GM12878 (cell line): ENCODE measurements at regions of chr5 and their contacts with region 1.

Region 1: GRCh38 chr5:180975338-180975737 is 13.3 kb upstream of the BTNL3 start:
- DNase-seq: peak; percentile 83
- ATAC-seq: peak; percentile 99
- H3K4me3 ChIP-seq: no peak overlapping the region
- H3K27ac ChIP-seq: peak overlapping the region; percentile 33; the same call in 1 of the 2 replicates
- H3K4me1 ChIP-seq: peaks cover 12% of the 10 kb centered on the region
- H3K27me3 ChIP-seq: no peaks in the 10 kb centered on the region
- CTCF ChIP-seq: no peak
- EP300 ChIP-seq: peak; percentile 22 to 27; a peak in 2 of 4 replicates
- POLR2A ChIP-seq: no peak
- RAD21 ChIP-seq: no peak

Region 2: GRCh38 chr5:181052672-181053487 is 77.5 kb after region 1 on chr5:
- CTCF ChIA-PET with region 1: interaction called, 4 read pairs
- POLR2A ChIA-PET with region 1: interaction called, 4 read pairs
- RAD21 ChIA-PET with region 1: interaction called, 16 read pairs
- SMC1A ChIA-PET with region 1: interaction called, 8 read pairs
- in situ Hi-C with region 1: no loop called
- intact Hi-C with region 1: no loop called
- DNase-seq: no peak
- ATAC-seq: no peak
- H3K4me3 ChIP-seq: peak overlapping the region; percentile 57; the same call in 1 of the 2 replicates
- H3K27ac ChIP-seq: no peak overlapping the region
- H3K4me1 ChIP-seq: peaks cover 12% of the 10 kb centered on the region
- H3K27me3 ChIP-seq: peaks cover 5 to 7% of the 10 kb centered on the region in 2 experiments
- CTCF ChIP-seq: no peak
- EP300 ChIP-seq: no peak
- POLR2A ChIP-seq: no peak
- RAD21 ChIP-seq: no peak

Region 3: DNA sequence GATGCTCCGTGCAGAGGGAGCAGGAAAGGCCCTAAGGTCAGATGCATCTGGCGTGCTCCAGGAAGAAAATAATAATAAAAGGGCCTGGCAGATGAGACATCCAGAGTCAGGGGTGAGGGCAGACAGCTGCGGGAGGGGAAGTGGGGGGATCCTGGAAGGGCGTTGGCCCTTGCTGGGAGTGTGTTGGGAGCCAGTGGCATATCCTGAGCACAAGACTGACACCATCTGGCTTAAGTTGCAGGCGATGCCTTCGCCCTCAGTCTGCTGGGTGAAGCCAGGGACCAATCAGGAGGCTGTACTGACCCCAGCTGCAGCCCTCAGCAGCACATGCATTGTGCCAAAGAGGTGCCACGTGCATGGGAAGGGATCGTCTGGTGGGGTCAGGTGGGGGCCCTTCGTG is 175.8 kb after region 1 on chr5:
- CTCF ChIA-PET with region 1: no interaction called
- POLR2A ChIA-PET with region 1: interaction called, 4 read pairs
- RAD21 ChIA-PET with region 1: interaction called, 12 read pairs
- SMC1A ChIA-PET with region 1: interaction called, 11 read pairs
- in situ Hi-C with region 1: no loop called
- intact Hi-C with region 1: loop called (anchors 10 kb)
- DNase-seq: no peak
- ATAC-seq: peak; percentile 40
- H3K4me3 ChIP-seq: no peak overlapping the region
- H3K27ac ChIP-seq: no peak overlapping the region
- H3K4me1 ChIP-seq: 0 out of 2 replicates have a peak, but pooled peaks cover 6% of the 10 kb centered on the region
- H3K27me3 ChIP-seq: no peaks in the 10 kb centered on the region
- CTCF ChIP-seq: peak in 1 of 3 experiments; percentile 19; a peak in 1 of 6 replicates
- EP300 ChIP-seq: no peak
- POLR2A ChIP-seq: no peak
- RAD21 ChIP-seq: no peak